ENCODE measurements at regions of chr5 and their contacts with region 1.

Region 1: DNA sequence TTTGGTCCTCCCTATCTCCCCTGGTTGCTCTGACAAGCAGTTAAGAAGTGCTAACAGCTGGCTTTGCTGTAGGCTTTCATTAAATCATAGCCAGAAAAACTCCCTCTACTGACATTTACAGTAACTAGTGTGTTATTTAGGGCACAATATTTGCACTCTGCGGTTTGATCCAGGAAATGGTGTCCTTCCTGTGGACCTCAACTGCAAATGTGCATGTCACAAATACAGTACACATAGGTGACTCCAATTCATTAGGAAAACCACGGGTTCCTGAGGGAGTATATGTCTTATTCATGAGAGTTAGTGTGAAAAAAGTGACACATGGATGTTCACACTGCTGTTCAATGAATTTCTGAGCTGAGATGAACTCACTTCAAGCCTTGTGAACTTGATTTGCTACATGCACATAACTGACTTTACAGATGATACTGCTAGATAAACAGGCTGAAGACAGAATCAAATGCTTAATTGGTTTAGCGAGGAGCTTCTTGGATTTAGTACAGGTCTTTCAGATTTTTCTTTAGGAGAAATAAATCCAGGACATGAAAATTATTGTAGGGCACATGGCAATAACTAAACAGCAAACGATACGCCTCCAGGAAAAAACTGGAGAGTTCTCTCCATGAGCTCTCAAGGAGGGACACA is 281.5 kb downstream of the EFNA5 start:
- DNase-seq: peak; percentile 78
- H3K4me3 Mint-ChIP-seq: peak overlapping the region; percentile 33
- H3K27ac Mint-ChIP-seq: peak overlapping the region; percentile 85
- H3K4me1 Mint-ChIP-seq: peaks cover 20% of the 10 kb centered on the region
- H3K27me3 Mint-ChIP-seq: peaks cover 4% of the 10 kb centered on the region

Region 2: DNA sequence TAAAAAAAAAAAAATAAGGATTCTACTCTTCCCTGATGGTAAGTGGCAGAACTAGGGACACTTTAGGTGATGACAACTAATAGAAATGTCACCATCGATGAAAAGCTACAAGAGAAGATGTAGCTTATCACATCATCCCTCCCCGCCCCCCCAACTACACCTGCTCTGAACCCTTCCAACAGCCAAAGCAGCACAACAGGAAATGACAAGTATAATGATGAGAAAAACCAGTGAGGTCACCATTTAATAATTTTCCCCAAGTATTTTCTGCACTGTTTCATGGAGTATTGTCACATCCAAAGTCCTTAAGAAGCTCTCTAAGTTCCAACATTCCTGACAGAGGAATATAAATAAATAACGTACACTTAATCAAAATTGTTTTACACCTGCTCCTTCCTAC is 60.1 kb after region 1 on chr5:
- intact Hi-C with region 1: no loop called
- DNase-seq: no peak
- H3K4me3 Mint-ChIP-seq: no peak overlapping the region
- H3K27ac Mint-ChIP-seq: no peak overlapping the region
- H3K4me1 Mint-ChIP-seq: no peaks in the 10 kb centered on the region
- H3K27me3 Mint-ChIP-seq: peaks cover 6% of the 10 kb centered on the region

Region 3: DNA sequence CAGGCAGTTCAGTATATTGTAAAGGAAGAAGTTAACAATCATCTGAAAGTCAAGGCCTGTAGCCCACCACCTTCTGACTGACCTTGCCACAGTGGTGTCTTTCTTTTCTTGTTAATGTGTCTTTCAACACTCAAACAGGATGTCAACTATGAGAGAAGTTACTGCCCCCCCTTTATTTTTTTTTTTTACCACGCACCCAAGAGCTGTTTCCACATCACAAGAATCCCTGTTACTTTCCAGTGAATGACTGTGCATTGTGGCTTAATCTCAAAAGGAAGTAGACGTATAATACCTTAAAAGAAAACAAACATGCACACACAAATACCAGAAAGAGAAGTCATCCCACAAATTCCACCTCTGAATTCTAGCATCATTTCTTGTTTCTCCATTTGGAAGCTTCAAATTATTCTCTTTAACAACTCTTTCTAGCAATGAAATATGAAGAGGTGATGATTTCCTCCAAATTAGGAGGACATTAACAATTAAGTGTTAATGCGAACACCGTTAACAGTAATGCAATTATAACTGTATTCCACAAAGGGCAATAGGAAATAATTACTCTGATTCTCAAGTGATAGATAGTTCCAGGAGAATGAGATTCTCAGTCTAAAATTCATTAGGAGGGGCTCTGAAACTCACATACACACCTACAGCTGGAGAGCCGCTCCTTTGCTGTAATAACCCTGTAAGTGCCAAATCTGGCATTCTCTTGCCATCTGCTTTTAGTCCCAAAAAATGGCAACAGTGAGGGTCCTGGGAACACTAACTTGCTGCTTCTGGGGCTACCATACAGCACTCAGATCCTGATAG is 80.4 kb after region 1 on chr5:
- intact Hi-C with region 1: loop called (anchors 5 kb)
- DNase-seq: peak; percentile 53
- H3K4me3 Mint-ChIP-seq: no peak overlapping the region
- H3K27ac Mint-ChIP-seq: no peak overlapping the region
- H3K4me1 Mint-ChIP-seq: peaks cover 7% of the 10 kb centered on the region
- H3K27me3 Mint-ChIP-seq: peaks cover 3% of the 10 kb centered on the region

Measured in activated CD4-positive, alpha-beta T cell treated with anti-CD3 and anti-CD28 coated beads, Interleukin-2, amount 10 ng/mL, durations not matched to agents 24 days and 14 days (primary cell).